Activated T-helper 1 cell treated with anti-CD3 and anti-CD28 coated beads, Interleukin-12 subunit alpha, Interleukin-12 subunit beta, Interleukin-2, Interleukin-4 antibody, amounts not matched to agents 30 ng/mL and 10 ng/mL and 1 ng/mL, durations not matched to agents 14 hours and 24 hours and 36 hours (primary cell): ENCODE measurements at regions of chr12 and their contacts with region 1.

Region 1: GRCh38 chr12:14960548-14961465 is 594 bp downstream of the ARHGDIB start:
- DNase-seq: peak; percentile 34
- H3K4me3 Mint-ChIP-seq: peak overlapping the region; percentile 97
- H3K27ac Mint-ChIP-seq: peak overlapping the region; percentile 97
- H3K4me1 Mint-ChIP-seq: peaks cover 68% of the 10 kb centered on the region
- H3K27me3 Mint-ChIP-seq: no peaks in the 10 kb centered on the region

Region 2: GRCh38 chr12:14394317-14395073 is 566.3 kb before region 1 on chr12:
- intact Hi-C with region 1: loop called (anchors 5 kb)
- DNase-seq: peak; percentile 38
- H3K4me3 Mint-ChIP-seq: peak overlapping the region; percentile 64
- H3K27ac Mint-ChIP-seq: peak overlapping the region; percentile 89
- H3K4me1 Mint-ChIP-seq: peaks cover 87% of the 10 kb centered on the region
- H3K27me3 Mint-ChIP-seq: no peaks in the 10 kb centered on the region

Region 3: DNA sequence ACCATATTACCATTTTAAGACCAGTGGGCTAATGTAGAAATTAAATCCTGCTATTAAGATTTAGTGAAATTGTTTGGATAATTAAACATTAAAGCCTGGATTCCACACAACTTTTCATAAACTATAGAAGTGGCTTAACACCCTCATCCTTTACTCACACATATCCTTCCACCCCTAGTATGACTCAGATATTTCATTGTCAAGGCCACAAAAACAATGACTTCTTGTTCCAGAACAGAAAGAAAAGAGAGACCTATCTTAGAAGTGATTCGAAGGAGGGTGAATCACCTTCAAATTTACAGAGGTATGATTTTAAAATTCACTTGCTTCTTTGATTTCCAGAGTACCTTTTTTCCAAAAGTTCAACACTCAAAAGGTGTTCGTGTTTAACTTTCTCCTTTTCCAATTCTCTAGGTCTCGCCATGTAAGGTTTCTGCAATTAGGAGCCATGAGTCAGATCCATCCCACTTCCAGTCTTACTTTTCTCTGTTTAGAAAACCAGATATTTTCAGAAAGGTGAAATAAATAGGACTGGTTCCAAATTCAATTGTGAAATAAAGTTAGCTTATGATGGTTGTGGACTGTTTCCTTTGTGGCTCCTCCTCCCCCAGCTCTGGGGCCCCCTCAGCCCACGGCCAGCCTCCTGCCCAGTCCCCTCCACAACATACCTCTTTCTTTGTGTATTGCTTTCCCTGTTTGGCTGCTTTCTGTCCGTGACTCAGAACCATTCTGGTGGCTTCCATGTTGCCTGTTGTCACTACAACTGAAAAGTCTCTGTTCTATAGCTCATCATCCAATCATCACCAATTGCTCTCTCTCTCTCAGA is 50.5 kb before region 1 on chr12:
- intact Hi-C with region 1: loop called (anchors 2 kb)
- DNase-seq: no peak
- H3K4me3 Mint-ChIP-seq: peak overlapping the region; percentile 56
- H3K27ac Mint-ChIP-seq: peak overlapping the region; percentile 97
- H3K4me1 Mint-ChIP-seq: peaks cover 31% of the 10 kb centered on the region
- H3K27me3 Mint-ChIP-seq: no peaks in the 10 kb centered on the region

Region 4: DNA sequence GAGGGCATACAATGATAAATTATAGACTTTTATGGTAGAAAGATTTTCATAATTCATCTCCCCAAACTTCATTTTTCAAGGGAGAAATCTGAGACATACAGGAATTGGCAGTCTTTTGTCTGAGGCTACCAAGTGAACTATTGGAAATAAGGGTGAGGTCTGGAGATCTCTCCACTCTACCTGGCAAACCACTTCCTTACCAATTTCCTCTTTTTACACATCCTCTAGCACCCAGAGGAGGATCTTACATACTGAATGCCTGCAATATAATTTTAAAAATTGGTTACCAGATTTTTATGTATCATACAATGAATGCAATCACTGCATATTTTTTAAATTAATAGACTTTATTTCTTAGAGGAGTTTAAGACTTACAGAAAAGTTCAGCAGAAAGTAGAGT is 18.7 kb after region 1 on chr12:
- intact Hi-C with region 1: loop called (anchors 2 kb)
- DNase-seq: no peak
- H3K4me3 Mint-ChIP-seq: no peak overlapping the region
- H3K27ac Mint-ChIP-seq: no peak overlapping the region
- H3K4me1 Mint-ChIP-seq: peaks cover 57% of the 10 kb centered on the region
- H3K27me3 Mint-ChIP-seq: no peaks in the 10 kb centered on the region

Region 5: DNA sequence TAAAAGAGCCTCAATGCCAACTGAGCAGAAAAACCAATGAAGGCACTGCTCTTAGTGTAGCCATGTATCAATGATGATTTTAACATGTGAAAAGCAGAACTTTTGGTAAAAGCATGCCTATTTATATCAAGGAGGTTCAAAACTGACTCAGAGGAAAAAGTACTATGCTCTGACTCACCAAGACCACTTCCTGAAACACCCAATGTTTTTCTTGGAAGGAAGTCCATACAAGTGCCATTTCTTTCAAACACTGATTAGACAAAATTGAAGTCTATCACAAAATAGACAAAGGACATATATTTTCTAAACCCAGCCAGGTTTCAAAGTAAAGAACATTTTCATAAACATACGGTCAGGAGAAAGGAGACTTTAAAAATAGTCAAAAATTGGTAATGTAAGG is 739.8 kb after region 1 on chr12:
- intact Hi-C with region 1: loop called (anchors 5 kb)
- DNase-seq: peak; percentile 14
- H3K4me3 Mint-ChIP-seq: peak overlapping the region; percentile 75
- H3K27ac Mint-ChIP-seq: peak overlapping the region; percentile 88
- H3K4me1 Mint-ChIP-seq: peaks cover 40% of the 10 kb centered on the region
- H3K27me3 Mint-ChIP-seq: no peaks in the 10 kb centered on the region